ENCODE measurements at regions of chr14 and their contacts with region 1.

Region 1: DNA sequence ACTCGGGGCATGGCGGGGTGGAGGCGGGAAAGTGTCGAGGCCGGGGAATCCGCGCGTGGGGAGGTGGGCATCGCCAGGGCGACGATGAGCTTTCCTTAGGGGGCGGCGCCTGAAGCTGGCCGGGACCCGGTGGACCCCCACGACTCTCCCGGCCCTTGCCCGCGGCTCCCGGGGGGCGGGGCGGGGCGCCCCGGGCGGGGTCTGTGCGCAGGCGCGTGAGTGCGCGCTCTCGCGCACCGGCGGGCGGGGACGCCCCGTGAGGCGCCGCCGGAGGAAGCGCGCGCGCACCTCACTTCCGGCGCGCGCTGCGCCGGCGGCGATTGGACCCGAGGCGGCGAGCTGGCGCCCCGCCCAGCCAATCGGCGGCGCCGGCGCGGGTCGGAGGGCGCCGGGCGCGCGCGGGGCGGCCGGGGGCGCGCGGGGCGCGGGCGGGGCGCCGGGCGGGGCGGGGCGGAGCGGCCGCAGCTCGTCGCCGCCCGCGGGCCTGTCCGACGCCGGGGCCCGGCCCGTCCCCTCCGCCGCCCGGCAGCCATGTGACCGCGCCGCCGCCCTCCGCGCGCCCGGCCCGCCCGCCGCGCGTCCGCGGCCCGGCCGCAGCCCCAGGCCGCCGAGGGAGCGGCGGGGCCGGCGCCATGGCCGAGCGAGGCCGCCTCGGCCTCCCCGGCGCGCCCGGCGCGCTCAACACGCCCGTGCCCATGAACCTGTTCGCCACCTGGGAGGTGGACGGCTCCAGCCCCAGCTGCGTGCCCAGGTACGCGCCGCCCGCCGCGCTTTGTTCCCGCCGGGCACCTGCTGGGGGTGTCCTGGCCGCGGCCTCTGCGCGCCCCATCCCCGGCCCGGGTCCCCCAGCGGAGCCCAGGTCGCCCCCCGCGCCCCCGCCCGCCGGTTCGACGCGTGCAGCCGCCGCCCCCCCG is at the start of gene PACS2:
- DNase-seq: peak; percentile 73 to 89 (median 82)
- ATAC-seq: peak; percentile 59 to 90 (median 85)
- H3K4me3 ChIP-seq: peak within 1 kb of the TSS; percentile 67 to 97 (median 80)
- H3K27ac ChIP-seq: peak within 1 kb of the TSS; percentile 54 to 99 (median 91)
- H3K4me1 ChIP-seq: peaks cover 0 to 41% (median 34%) of the 10 kb centered on the region in 12 donors
- H3K27me3 ChIP-seq: no peaks in the 10 kb centered on the region
- CTCF ChIP-seq: no peak
- POLR2A ChIP-seq: peak in 1 of 2 donors; percentile 33
- total RNA-seq, gene PACS2: 47.3 to 90.3 (median 60.8) TPM

Region 2: DNA sequence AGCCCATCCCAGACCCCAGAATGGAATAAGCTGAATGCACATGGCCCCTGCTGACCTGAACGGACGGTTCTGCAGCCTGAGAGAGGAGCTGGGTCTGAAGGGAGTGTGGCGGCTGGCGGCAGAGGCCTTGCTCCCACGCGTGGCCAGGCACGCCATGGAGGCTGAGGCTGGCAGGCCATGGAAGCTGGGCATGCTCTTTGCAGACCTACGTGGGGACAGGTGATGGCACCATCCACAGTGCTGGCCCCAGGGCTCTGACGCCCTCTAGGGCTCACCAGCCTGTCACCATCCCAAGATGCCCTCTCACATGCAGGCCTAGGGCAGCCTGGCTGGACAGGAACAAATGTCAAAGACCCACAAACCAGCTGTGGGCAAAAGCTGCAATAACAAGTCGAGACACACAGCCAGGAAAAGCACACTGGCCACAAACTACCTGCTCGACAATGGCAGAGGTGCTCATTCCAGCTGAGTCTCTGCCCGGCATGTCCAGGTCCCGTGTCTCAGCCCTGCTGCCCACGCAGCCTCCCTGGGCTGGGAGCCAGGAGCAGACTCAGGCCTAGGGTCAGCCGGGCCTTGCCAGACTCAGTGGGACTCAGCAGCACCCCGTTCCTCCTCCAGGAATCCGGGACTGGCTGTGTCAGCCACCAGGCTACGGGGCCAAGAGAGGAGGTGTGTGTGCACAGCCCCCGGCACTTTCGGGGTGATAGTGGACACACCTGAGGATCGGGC is 46.6 kb before region 1 on chr14:
- intact Hi-C with region 1: no loop called
- DNase-seq: no peak
- ATAC-seq: peak in 3 of 4 donors; percentile 74 to 79 (median 75)
- H3K4me3 ChIP-seq: no peak overlapping the region
- H3K27ac ChIP-seq: no peak overlapping the region
- H3K4me1 ChIP-seq: peaks cover 0 to 10% (median 0%) of the 10 kb centered on the region in 12 donors
- H3K27me3 ChIP-seq: no peaks in the 10 kb centered on the region
- CTCF ChIP-seq: peak in 6 of 12 donors; percentile 12 to 22 (median 19)
- POLR2A ChIP-seq: no peak

Region 3: GRCh38 chr14:105300792-105301533 is 13.6 kb before region 1 on chr14 and contains the start of gene BRF1:
- intact Hi-C with region 1: loop called in 1 of 10 experiments (anchors 2 kb)
- DNase-seq: peak; percentile 98 to 100 (median 98)
- ATAC-seq: peak; percentile 94 to 98 (median 96)
- H3K4me3 ChIP-seq: peak within 1 kb of the TSS; percentile 61 to 98 (median 88)
- H3K27ac ChIP-seq: peak within 1 kb of the TSS; percentile 85 to 99 (median 94)
- H3K4me1 ChIP-seq: peaks cover 0 to 42% (median 16%) of the 10 kb centered on the region in 12 donors
- H3K27me3 ChIP-seq: no peaks in the 10 kb centered on the region
- CTCF ChIP-seq: no peak
- POLR2A ChIP-seq: peak in 1 of 2 donors; percentile 72
- total RNA-seq, gene BRF1: 13.3 to 25.3 (median 18.7) TPM

Measured in heart left ventricle (tissue), 16 donors.